Lower leg skin (tissue), 4 donors: ENCODE measurements at regions of chr22 and their contacts with region 1.

Region 1: GRCh38 chr22:40583053-40583741 is 53.3 kb downstream of the MRTFA start:
- DNase-seq: no peak
- H3K4me3 ChIP-seq: no peak overlapping the region
- CTCF ChIP-seq: no peak
- POLR2A ChIP-seq: no peak

Region 2: GRCh38 chr22:40547729-40548172 is 35.4 kb before region 1 on chr22:
- intact Hi-C with region 1: no loop called
- DNase-seq: no peak
- H3K4me3 ChIP-seq: no peak overlapping the region
- CTCF ChIP-seq: no peak
- POLR2A ChIP-seq: no peak

Region 3: GRCh38 chr22:40567106-40567505 is 16.1 kb before region 1 on chr22:
- intact Hi-C with region 1: loop called (anchors 1 kb)
- DNase-seq: no peak
- H3K4me3 ChIP-seq: no peak overlapping the region
- CTCF ChIP-seq: no peak
- POLR2A ChIP-seq: no peak

Region 4: GRCh38 chr22:41808400-41808799 is 1225.2 kb after region 1 on chr22:
- intact Hi-C with region 1: loop called (anchors 5 kb)
- DNase-seq: no peak
- H3K4me3 ChIP-seq: no peak overlapping the region
- CTCF ChIP-seq: no peak
- POLR2A ChIP-seq: no peak